ENCODE measurements at regions of chr6 and their contacts with region 1.

Region 1: GRCh38 chr6:44074439-44075136 is 52.7 kb downstream of the MRPL14 start:
- DNase-seq: peak; percentile 63 to 96 (median 81)

Region 2: DNA sequence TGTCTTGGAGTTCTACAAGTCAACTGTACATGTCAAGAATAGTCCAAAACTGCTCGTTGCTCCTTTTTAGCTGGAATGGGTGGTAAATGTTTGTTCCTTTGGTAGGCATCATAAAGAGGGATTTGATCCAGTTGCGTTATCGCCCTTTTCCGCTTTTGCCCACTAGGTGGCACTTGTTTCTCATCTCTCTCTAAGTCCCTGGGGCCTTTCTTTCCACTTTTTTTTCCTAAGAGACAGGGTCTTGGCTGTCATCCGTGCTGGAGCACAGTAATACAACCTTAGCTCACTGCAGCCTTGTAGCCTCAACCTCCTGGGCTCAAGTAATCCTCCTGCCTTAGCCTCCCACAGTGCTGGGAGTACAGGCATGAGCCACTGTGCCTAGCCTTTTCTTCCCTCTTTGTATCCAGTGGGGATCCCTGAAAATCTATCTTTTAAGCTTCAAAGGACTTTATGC is 466.3 kb before region 1 on chr6:
- intact Hi-C with region 1: loop called (anchors 2 kb)
- DNase-seq: peak in 8 of 10 donors; percentile 38 to 91 (median 66)

Region 3: DNA sequence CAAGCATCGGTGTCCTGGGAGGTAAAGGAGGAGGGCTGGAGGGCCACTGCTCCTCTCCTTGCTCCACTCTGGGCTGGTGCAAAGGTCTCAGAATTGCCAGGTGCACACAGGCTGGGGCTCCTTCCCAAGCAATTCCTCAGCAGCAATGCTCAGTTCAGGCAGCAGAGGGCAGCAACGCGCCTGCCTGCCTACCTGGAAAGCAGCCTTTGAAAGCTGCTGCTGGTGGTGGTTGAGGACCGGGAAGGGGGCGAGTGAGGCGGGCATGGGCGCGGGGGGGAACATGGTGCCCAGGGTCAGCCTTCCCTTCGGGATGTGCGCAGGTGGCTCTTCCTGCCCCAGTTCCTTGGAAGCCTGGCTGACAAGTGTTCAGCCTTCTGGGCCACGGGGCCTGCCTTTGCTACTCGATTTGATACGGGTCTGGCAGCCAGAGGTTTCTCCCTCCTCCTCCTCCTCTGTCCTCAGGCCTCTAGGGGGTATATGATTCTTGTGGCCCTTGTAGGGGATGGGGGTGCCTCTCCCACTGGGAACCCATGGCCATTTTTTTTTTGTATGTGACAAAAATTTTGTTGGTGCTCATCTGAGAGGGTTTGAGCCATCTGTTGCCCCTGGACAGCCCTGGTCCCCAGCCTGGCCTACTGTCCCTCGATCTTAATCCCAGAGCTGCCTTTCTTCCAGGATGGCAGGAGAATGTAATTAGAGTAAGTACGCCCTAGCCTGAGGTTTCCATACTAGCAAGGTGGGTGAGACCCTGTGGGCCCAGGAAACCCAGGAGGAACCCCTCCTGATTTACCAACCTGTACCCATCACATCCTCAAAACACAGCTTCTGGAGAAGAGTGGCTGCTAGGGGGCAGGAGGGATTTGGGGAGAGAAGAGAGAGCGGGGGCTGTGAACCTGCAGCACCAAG is 407.1 kb before region 1 on chr6:
- intact Hi-C with region 1: loop called (anchors 1 kb)
- DNase-seq: peak; percentile 71 to 98 (median 90)

Region 4: DNA sequence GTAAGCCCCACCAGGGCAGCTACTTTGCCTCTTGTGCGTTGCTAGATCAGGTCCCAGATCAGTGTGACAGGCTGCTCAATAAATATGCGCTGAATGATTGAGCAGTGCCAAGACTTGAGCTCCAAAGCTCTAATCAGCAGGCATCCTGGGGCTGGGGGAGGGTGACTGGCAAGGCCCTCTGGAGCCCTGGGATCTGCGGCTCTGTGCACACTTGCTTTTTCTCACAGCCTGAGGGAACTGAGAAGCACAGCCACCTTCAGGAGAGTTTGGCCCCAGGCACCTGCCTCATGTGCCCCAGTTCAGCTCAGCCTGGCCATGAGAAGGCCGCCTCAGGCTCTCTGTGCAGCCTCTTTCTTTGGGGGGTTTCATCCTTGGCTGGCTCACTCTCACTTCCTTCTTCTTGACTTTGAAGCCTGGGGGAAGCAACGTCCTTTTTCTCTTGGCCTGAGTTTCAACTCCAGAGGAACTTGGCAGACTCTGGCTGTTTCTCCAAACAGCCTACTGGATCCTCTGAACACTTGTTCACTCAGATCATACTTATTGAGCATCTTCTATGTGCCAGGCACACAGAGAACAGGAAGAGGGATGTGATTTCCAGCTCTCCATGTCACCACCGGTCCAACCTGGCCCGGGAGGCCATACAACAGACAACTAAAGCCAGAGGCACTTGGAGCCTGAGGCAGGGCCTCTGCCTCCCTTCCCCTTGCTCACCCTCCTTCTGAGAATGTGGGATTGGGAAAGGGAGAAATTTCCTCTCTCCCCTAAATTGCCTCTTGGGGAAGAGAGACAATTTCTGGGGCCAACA is 190.5 kb before region 1 on chr6:
- intact Hi-C with region 1: no loop called
- DNase-seq: peak in 2 of 10 donors; percentile 41 to 64

Measured in posterior cingulate gyrus (tissue), 11 donors.